ENCODE measurements at regions of chr7 and their contacts with region 1.

Region 1: GRCh38 chr7:141785706-141786552 is 4.1 kb upstream of the TAS2R5 start:
- DNase-seq: peak in 5 of 9 donors; percentile 24 to 40 (median 33)
- ATAC-seq: peak; percentile 57
- H3K4me3 ChIP-seq: no peak overlapping the region
- H3K4me3 Mint-ChIP-seq: no peak overlapping the region
- H3K27ac ChIP-seq: no peak overlapping the region
- H3K27ac Mint-ChIP-seq: peak overlapping the region in 1 of 9 donors; percentile 4
- H3K4me1 ChIP-seq: no peaks in the 10 kb centered on the region
- H3K4me1 Mint-ChIP-seq: peaks cover 0 to 5% (median 0%) of the 10 kb centered on the region in 7 donors
- H3K27me3 ChIP-seq: no peaks in the 10 kb centered on the region
- H3K27me3 Mint-ChIP-seq: no peaks in the 10 kb centered on the region

Region 2: DNA sequence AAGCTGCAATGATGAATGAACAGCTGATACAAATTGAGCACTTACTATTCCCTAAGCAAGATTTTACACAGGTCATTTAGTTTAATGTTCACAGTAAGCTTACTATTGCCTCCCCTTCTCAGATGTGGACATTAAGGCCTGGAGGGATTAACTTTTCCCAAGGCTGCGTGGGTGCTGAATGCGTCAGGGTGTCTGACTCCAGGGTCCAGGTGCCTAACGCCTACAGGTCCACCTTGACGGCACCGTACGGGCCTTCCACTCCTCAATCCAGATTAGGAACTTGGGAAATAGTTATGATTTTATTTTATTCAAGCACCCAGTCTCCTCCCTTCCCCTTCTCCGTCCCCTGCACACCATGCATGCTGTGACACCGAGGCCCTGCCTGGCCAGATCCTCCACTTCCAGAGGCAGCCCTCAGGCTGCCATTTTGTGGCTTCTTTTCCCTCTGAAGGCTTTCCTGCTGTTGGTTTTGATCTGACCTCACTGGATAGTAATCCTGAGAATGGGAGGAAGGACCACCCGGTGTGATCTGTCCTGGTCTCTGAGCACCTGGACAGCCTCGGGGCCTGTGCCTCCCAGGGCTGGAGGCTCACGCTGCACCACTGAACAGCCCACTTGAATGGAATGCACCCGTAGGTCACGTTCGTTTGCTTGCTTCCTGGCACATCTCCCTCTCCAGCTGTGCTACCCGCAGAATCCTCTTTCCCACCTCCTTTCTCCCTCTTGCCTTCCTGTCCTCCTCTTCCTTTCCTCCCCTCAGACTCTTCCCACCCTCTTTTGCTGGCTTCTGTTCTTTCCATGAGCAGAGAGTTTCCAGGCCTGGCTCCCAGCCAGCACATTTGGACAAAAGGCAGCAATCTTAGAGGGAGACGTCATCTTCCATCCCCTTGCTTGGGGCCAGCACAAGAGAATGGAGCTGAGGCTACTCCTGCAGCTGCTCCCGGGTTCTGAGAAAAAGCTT is 1159.7 kb before region 1 on chr7:
- CTCF ChIA-PET with region 1: no interaction called
- POLR2A ChIA-PET with region 1: no interaction called
- intact Hi-C with region 1: no loop called
- DNase-seq: no peak
- ATAC-seq: no peak
- H3K4me3 ChIP-seq: no peak overlapping the region
- H3K4me3 Mint-ChIP-seq: no peak overlapping the region
- H3K27ac ChIP-seq: no peak overlapping the region
- H3K27ac Mint-ChIP-seq: no peak overlapping the region
- H3K4me1 ChIP-seq: no peaks in the 10 kb centered on the region
- H3K4me1 Mint-ChIP-seq: no peaks in the 10 kb centered on the region
- H3K27me3 ChIP-seq: no peaks in the 10 kb centered on the region
- H3K27me3 Mint-ChIP-seq: peaks cover 0 to 8% (median 8%) of the 10 kb centered on the region in 5 donors

Region 3: DNA sequence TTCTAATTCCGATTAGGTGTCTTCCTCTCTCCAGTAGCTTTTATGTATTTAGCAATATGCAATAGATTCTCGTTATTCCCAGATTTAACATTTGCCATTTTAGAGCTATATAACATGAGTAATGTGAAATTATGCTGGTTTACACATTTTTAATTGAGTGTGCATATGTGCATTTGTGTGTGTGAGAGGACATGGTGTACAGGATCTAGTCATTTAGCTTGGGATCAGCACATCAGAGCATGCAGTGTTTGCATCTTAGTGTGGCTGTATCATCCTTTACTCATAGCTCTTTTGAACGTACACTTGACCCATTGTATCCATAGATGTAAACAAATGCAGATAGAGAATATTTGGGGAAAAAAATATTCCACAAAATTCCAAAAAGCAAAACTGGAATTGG is 149.9 kb before region 1 on chr7:
- CTCF ChIA-PET with region 1: no interaction called
- POLR2A ChIA-PET with region 1: no interaction called
- intact Hi-C with region 1: no loop called
- DNase-seq: no peak
- ATAC-seq: no peak
- H3K4me3 ChIP-seq: no peak overlapping the region
- H3K4me3 Mint-ChIP-seq: no peak overlapping the region
- H3K27ac ChIP-seq: no peak overlapping the region
- H3K27ac Mint-ChIP-seq: no peak overlapping the region
- H3K4me1 ChIP-seq: no peaks in the 10 kb centered on the region
- H3K4me1 Mint-ChIP-seq: peaks cover 0 to 5% (median 0%) of the 10 kb centered on the region in 7 donors
- H3K27me3 ChIP-seq: no peaks in the 10 kb centered on the region
- H3K27me3 Mint-ChIP-seq: no peaks in the 10 kb centered on the region

Region 4: GRCh38 chr7:141754939-141755338 is 31.0 kb before region 1 on chr7:
- CTCF ChIA-PET with region 1: interaction called, 3 read pairs
- POLR2A ChIA-PET with region 1: no interaction called
- intact Hi-C with region 1: loop called (anchors 1 to 2 kb)
- DNase-seq: peak in 4 of 9 donors; percentile 11 to 19 (median 16)
- ATAC-seq: peak; percentile 58
- H3K4me3 ChIP-seq: no peak overlapping the region
- H3K4me3 Mint-ChIP-seq: no peak overlapping the region
- H3K27ac ChIP-seq: no peak overlapping the region
- H3K27ac Mint-ChIP-seq: no peak overlapping the region
- H3K4me1 ChIP-seq: no peaks in the 10 kb centered on the region
- H3K4me1 Mint-ChIP-seq: peaks cover 0 to 21% (median 12%) of the 10 kb centered on the region in 7 donors
- H3K27me3 ChIP-seq: no peaks in the 10 kb centered on the region
- H3K27me3 Mint-ChIP-seq: no peaks in the 10 kb centered on the region

Measured in naive thymus-derived CD4-positive, alpha-beta T cell (primary cell).